Posterior cingulate gyrus (tissue), 11 donors: ENCODE measurements at regions of chr2 and their contacts with region 1.

Region 1: GRCh38 chr2:104502901-104503300 is 351.0 kb upstream of the POU3F3 start:
- DNase-seq: peak; percentile 74 to 97 (median 86)

Region 2: GRCh38 chr2:104111226-104111625 is 391.7 kb before region 1 on chr2:
- intact Hi-C with region 1: no loop called
- DNase-seq: no peak

Region 3: GRCh38 chr2:104447831-104448434 is 55.0 kb before region 1 on chr2:
- intact Hi-C with region 1: loop called (anchors 5 kb)
- DNase-seq: no peak

Region 4: GRCh38 chr2:104481371-104481805 is 21.5 kb before region 1 on chr2:
- intact Hi-C with region 1: loop called (anchors 1 kb)
- DNase-seq: no peak

Region 5: DNA sequence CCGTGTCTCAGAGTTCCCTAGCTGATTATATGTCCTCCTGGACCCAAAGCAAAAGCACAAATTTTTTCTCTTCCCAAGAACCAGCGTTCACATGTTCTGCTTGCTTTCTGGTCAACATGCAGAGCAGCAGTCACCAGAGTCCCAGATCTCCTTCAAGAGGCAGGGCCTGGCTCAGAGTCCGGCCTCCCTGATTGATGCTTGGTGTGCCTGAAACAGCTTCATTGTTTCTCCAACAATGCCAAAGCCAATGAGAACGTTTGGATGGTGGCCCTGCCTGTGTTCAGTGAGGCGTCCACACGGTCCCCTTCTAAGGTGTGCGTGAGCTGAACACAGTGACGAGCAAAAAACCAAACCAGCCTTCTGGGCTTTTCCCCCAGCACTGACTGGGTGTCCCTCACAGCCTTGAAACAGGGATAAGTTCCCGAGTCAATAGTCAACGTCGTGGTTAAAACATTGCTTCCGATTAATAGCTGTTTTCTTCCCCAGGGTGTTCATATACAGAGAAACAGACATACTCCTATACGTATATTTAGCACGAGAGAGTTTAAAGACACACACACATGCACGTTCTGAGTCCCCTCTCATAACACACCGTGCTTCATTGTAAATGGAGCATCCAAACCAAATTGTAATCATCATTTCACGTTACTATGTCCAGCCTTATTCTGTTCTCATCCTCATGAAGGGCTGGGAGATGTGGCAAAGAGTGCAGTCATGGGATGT is 331.7 kb after region 1 on chr2:
- intact Hi-C with region 1: loop called (anchors 10 kb)
- DNase-seq: peak in 9 of 10 donors; percentile 59 to 93 (median 70)